ENCODE measurements at regions of chr4 and their contacts with region 1.

Region 1: GRCh38 chr4:143513306-143514168 is at the start of gene SMARCA5:
- DNase-seq: peak; percentile 91 to 98 (median 96)
- ATAC-seq: peak; percentile 87
- H3K4me3 Mint-ChIP-seq: peak within 1 kb of the TSS; percentile 91 to 100 (median 99)
- H3K27ac Mint-ChIP-seq: peak within 1 kb of the TSS; percentile 99 to 100 (median 100)
- H3K4me1 Mint-ChIP-seq: peaks cover 9 to 56% (median 40%) of the 10 kb centered on the region in 4 donors
- H3K27me3 Mint-ChIP-seq: peaks cover 0 to 2% (median 0%) of the 10 kb centered on the region in 5 donors
- polyA plus RNA-seq, gene SMARCA5: 19.1 to 34.0 (median 24.6) TPM

Region 2: GRCh38 chr4:143399113-143399949 is 114.2 kb before region 1 on chr4:
- POLR2A ChIA-PET with region 1: no interaction called
- DNase-seq: peak in 3 of 10 donors; percentile 17 to 28 (median 19)
- ATAC-seq: peak in 1 of 2 donors; percentile 42
- H3K4me3 Mint-ChIP-seq: no peak overlapping the region
- H3K27ac Mint-ChIP-seq: no peak overlapping the region
- H3K4me1 Mint-ChIP-seq: peaks cover 0 to 26% (median 4%) of the 10 kb centered on the region in 4 donors
- H3K27me3 Mint-ChIP-seq: peaks cover 0 to 13% (median 1%) of the 10 kb centered on the region in 5 donors

Region 3: GRCh38 chr4:143482840-143483239 is 30.7 kb before region 1 on chr4:
- POLR2A ChIA-PET with region 1: no interaction called
- DNase-seq: no peak
- ATAC-seq: no peak
- H3K4me3 Mint-ChIP-seq: no peak overlapping the region
- H3K27ac Mint-ChIP-seq: no peak overlapping the region
- H3K4me1 Mint-ChIP-seq: peaks cover 0 to 3% (median 0%) of the 10 kb centered on the region in 4 donors
- H3K27me3 Mint-ChIP-seq: peaks cover 4 to 20% (median 10%) of the 10 kb centered on the region in 5 donors

Region 4: GRCh38 chr4:143558823-143559756 is 45.6 kb after region 1 on chr4:
- POLR2A ChIA-PET with region 1: interaction called, 18 read pairs
- DNase-seq: peak; percentile 51 to 83 (median 66)
- ATAC-seq: peak; percentile 85 to 87
- H3K4me3 Mint-ChIP-seq: peak overlapping the region; percentile 89 to 99 (median 93)
- H3K27ac Mint-ChIP-seq: peak overlapping the region; percentile 86 to 95 (median 93)
- H3K4me1 Mint-ChIP-seq: peaks cover 15 to 27% (median 20%) of the 10 kb centered on the region in 4 donors
- H3K27me3 Mint-ChIP-seq: no peaks in the 10 kb centered on the region